ENCODE measurements at regions of chr18 and their contacts with region 1.

Region 1: DNA sequence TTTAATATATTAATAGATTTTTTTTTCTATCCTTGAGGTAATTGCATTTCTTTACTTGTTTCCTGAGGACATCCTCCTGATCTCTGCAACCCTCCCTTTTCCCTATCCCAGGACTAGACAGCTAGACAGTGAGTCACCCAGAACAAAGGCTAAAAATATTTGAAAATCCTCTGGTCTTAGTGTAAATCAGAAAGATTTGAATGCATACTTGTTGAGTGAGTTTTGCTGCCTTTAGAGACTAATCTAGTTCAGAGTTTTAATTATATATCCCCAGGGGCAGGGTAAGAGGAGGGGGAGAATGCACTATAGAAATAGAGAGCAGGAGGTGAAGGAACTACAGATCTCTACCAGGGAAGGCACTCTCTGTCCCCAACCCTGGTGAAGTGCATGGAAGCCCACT is 202.3 kb upstream of the TCF4 start:
- DNase-seq: peak; percentile 90
- ATAC-seq: peak; percentile 88
- H3K4me3 ChIP-seq: no peak overlapping the region
- H3K27ac ChIP-seq: peak overlapping the region; percentile 76
- H3K4me1 ChIP-seq: peaks cover 16% of the 10 kb centered on the region
- H3K27me3 ChIP-seq: no peaks in the 10 kb centered on the region
- CTCF ChIP-seq: no peak
- POLR2A ChIP-seq: no peak
- RAD21 ChIP-seq: no peak

Region 2: DNA sequence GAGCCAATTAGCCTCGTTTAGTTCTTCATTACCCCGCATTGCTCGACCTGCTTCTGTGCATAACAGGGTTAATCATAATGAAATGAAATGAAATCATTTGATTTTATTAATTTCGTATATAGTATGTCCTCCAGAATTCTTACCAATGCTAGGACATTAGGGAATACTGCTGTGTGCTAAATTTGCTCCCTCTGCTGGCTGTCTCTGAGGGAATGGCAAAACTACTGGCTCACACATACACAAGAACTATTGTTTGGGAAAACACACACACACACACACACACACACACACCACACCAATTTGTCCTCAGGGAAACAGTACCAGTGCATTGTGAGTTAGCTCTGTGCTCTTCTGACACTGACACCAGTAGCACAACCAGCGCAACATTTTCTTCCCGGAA is 71.0 kb after region 1 on chr18:
- CTCF ChIA-PET with region 1: interaction called, 6 read pairs
- POLR2A ChIA-PET with region 1: no interaction called
- dilution Hi-C with region 1: no loop called
- in situ Hi-C with region 1: no loop called
- intact Hi-C with region 1: loop called (anchors 10 kb)
- DNase-seq: peak; percentile 60
- ATAC-seq: peak; percentile 59; the same call in 1 of the 2 replicates
- H3K4me3 ChIP-seq: no peak overlapping the region
- H3K27ac ChIP-seq: no peak overlapping the region
- H3K4me1 ChIP-seq: no peaks in the 10 kb centered on the region
- H3K27me3 ChIP-seq: no peaks in the 10 kb centered on the region
- CTCF ChIP-seq: peak; percentile 54
- POLR2A ChIP-seq: no peak
- RAD21 ChIP-seq: peak; percentile 58

Region 3: DNA sequence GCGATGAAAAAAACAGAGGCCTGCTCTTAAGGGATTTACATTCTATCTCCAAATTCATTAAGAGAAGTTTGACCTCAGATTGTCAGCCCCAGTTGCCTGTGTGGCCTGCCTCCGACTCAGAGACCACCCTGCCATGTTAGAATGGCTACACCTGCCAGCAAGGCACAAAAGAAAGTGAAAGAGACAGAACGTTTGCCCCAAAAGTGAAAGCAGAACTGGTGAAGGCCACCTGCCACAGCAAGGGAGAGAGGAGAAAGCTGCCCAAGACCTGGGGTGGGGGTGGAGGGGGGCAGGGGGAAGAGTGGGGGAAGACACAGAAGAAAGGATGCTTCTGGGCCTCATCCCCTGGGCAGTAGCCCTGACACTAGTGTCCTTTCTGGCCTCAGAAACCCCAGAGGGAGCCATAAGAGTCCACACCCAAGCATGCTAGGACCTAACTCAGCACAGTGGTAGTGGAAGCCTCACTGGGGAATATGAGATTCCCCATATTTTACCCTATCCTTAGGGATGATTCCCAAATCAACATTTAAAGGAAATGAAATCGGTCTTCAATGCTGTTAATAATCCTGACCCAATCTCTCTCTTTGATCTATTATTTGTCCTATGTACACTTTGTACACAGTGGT is 458.4 kb after region 1 on chr18:
- CTCF ChIA-PET with region 1: no interaction called
- POLR2A ChIA-PET with region 1: no interaction called
- dilution Hi-C with region 1: no loop called
- in situ Hi-C with region 1: no loop called
- intact Hi-C with region 1: loop called (anchors 10 kb)
- DNase-seq: no peak
- ATAC-seq: no peak
- H3K4me3 ChIP-seq: no peak overlapping the region
- H3K27ac ChIP-seq: no peak overlapping the region
- H3K4me1 ChIP-seq: peaks cover 4% of the 10 kb centered on the region
- H3K27me3 ChIP-seq: no peaks in the 10 kb centered on the region
- CTCF ChIP-seq: no peak
- POLR2A ChIP-seq: no peak
- RAD21 ChIP-seq: no peak